ENCODE measurements at regions of chr2 and their contacts with region 1.

Region 1: DNA sequence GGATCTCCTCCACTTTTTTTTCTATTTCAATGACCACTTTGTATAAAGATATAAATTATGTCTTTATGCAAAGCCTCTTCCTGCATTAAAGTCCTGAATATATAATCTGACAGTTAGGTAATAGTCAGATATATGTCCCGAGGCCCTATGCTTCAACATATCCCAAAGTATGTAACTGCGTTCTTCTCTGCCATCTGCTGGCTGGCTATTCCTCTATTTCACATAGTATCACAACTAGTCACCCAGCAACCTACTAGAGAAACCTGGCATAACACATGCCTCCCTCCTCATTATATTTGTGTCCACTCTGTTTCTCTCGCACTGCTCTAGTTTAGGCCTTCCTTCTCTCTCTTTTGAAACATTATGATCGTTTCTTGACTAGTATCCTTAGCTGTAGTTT is 640.8 kb downstream of the DPP10 start:
- DNase-seq: no peak
- ATAC-seq: no peak

Region 2: DNA sequence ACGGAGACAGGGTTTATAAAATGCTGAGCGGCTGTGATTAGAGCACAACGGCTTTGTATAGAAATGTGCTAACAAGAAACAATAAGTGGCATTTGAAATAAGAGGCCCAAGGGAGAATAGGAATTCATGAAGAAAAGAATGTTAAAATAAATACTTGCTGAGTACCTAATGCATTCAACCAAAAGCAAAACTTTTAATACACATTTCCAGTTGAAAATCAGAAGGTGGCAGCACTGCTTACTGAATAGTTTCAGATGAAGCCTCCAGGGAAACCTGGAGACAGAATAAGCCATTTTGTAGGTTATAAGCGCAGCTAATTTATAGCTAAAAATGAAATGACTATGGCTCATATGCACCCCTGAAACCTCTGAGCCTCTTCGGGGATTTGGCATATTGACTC is 354.2 kb before region 1 on chr2:
- intact Hi-C with region 1: loop called (anchors 5 kb)
- DNase-seq: no peak
- ATAC-seq: no peak

Region 3: GRCh38 chr2:114940785-114941458 is 142.3 kb before region 1 on chr2:
- intact Hi-C with region 1: no loop called
- DNase-seq: no peak
- ATAC-seq: no peak

Region 4: GRCh38 chr2:115299199-115299598 is 216.0 kb after region 1 on chr2:
- intact Hi-C with region 1: no loop called
- DNase-seq: no peak
- ATAC-seq: no peak

Measured in Right ventricle myocardium inferior (tissue), 1 donor.